ENCODE measurements at regions of chr19 and their contacts with region 1.

Region 1: GRCh38 chr19:17859533-17860330 is at the start of gene RPL18A:
- DNase-seq: peak; percentile 99
- ATAC-seq: peak; percentile 94
- H3K4me3 ChIP-seq: peak within 1 kb of the TSS; percentile 74 to 100 (median 96)
- H3K4me3 Mint-ChIP-seq: peak within 1 kb of the TSS; percentile 96
- H3K27ac ChIP-seq: peak within 1 kb of the TSS; percentile 69 to 76
- H3K27ac Mint-ChIP-seq: peak within 1 kb of the TSS; percentile 98
- H3K4me1 ChIP-seq: peaks cover 23 to 41% of the 10 kb centered on the region in 2 donors
- H3K4me1 Mint-ChIP-seq: peaks cover 45% of the 10 kb centered on the region
- H3K27me3 ChIP-seq: no peaks in the 10 kb centered on the region
- H3K27me3 Mint-ChIP-seq: no peaks in the 10 kb centered on the region
- CTCF ChIP-seq: peak; percentile 84
- total RNA-seq, gene RPL18A: 3,099 and 3,228 TPM in 2 replicates

Region 2: DNA sequence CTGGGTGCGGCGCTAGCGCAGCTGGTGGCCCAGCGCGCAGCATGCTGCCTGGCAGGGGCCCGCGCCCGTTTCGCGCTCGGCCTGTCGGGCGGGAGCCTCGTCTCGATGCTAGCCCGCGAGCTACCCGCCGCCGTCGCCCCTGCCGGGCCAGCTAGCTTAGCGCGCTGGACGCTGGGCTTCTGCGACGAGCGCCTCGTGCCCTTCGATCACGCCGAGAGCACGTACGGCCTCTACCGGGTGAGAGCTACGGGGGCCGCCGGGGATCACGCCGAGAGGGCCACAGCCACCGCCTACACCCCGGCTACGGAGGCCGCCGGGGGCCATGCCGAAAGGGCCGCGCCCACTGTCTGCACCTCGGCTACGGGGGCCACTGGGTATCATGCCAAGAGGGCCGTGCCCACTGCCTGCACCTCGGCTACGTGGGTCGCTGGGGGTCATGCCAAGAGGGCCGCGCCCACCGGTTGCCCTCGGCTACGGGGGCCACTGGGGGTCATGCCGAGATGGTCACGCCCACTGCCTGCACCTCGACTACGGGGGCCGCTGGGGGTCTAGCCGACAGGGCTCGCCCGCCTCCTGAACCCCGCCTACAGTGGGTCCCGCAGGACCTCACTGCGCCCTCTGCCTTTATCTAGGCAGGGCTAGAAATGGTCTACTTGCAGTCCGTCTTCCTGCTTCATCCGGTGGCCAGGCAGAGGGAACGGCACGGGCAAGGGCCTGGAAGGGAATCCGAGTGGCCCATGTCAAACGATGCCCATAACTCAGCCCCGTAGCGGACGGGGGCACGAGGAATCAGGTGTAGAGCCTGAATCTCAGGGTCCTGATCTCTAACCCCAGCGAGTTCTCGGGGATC is 347.8 kb before region 1 on chr19:
- CTCF ChIA-PET with region 1: interaction called, 3 read pairs
- POLR2A ChIA-PET with region 1: no interaction called
- intact Hi-C with region 1: loop called (anchors 5 kb)
- DNase-seq: peak; percentile 96
- ATAC-seq: peak; percentile 84
- H3K4me3 ChIP-seq: peak overlapping the region; percentile 68 to 98 (median 85)
- H3K4me3 Mint-ChIP-seq: peak overlapping the region; percentile 96
- H3K27ac ChIP-seq: peak overlapping the region; percentile 82 to 94
- H3K27ac Mint-ChIP-seq: peak overlapping the region; percentile 95
- H3K4me1 ChIP-seq: peaks cover 18 to 24% of the 10 kb centered on the region in 2 donors
- H3K4me1 Mint-ChIP-seq: peaks cover 40% of the 10 kb centered on the region
- H3K27me3 ChIP-seq: no peaks in the 10 kb centered on the region
- H3K27me3 Mint-ChIP-seq: no peaks in the 10 kb centered on the region
- CTCF ChIP-seq: peak; percentile 38

Region 3: DNA sequence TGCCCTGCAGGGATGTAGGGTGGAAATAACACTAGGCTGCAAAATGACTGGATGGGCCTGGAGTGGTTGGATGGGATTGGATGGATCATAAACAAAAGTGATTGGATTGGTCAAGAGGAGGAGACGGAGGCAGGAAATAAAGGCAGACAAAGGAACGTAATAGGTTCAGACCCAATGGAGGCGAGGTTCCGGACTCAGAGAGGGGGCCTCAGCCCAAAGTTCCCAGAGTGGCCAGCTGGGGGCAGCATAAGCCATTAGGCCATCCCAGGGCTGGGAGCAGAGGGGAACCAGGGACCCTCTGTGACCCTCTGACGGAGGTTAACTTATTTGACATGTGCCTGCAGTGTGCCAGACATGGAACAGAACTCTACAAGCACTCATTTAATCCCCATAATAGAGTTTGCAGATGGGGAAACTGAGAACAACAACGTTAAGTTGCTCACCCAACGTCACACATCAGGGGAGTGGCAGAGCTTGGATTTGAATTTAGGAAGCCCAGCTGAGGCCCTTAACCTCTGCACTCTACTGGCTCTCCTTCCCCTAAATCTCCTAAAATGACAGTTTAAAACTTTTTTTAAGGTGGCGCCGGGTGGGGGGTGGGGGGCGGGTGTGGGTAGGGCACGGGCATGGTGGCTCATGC is 155.8 kb before region 1 on chr19:
- CTCF ChIA-PET with region 1: interaction called, 89 read pairs
- POLR2A ChIA-PET with region 1: interaction called, 3 read pairs
- intact Hi-C with region 1: loop called (anchors 1 kb)
- DNase-seq: peak; percentile 80
- ATAC-seq: peak; percentile 93
- H3K4me3 ChIP-seq: no peak overlapping the region
- H3K4me3 Mint-ChIP-seq: no peak overlapping the region
- H3K27ac ChIP-seq: no peak overlapping the region
- H3K27ac Mint-ChIP-seq: peak overlapping the region; percentile 11
- H3K4me1 ChIP-seq: no peaks in the 10 kb centered on the region
- H3K4me1 Mint-ChIP-seq: peaks cover 5% of the 10 kb centered on the region
- H3K27me3 ChIP-seq: peaks cover 0 to 9% (median under 1%) of the 10 kb centered on the region in 4 experiments
- H3K27me3 Mint-ChIP-seq: peaks cover 11% of the 10 kb centered on the region
- CTCF ChIP-seq: peak; percentile 87

Region 4: DNA sequence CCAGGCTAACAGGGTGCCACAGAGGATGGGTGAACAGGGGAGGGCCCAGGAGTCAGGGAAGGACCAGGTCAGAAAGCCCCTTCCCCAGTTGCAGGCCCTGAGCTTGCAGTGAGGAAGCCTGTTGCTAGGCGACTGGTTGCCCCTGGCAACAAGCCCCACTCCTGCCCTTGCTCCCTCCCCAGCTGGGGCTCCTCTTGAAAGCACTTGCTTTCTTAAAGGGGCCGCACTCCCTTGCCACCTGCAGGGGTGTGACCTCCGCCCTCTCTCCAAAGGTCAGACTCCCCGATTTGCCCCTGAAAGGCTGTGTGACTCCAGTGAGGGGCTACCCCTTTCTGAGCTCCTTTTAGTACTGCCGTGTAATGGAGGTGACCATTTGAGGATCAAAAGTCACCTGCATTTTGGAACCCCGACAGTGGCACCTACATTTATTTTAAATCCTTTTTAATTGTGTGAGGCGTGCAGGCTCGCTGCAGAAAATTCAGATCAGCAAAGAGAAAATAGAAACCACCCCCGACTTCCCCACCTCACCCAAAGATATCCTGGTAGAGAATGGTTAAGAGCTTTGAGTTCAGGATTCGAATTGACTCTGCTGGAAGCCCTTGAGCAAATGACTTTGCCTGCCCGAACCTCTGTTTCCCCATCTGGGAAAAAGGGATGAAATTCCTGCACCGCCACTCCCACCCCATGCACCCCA is 103.6 kb before region 1 on chr19:
- CTCF ChIA-PET with region 1: interaction called, 15 read pairs
- POLR2A ChIA-PET with region 1: interaction called, 4 read pairs
- intact Hi-C with region 1: loop called (anchors 5 kb)
- DNase-seq: peak; percentile 82
- ATAC-seq: peak; percentile 4
- H3K4me3 ChIP-seq: peak overlapping the region in 1 of 5 experiments; percentile 34
- H3K4me3 Mint-ChIP-seq: peak overlapping the region; percentile 84
- H3K27ac ChIP-seq: peak overlapping the region; percentile 56 to 70
- H3K27ac Mint-ChIP-seq: peak overlapping the region; percentile 93
- H3K4me1 ChIP-seq: peaks cover 51 to 65% of the 10 kb centered on the region in 2 donors
- H3K4me1 Mint-ChIP-seq: peaks cover 79% of the 10 kb centered on the region
- H3K27me3 ChIP-seq: no peaks in the 10 kb centered on the region
- H3K27me3 Mint-ChIP-seq: no peaks in the 10 kb centered on the region
- CTCF ChIP-seq: no peak

Region 5: GRCh38 chr19:17784201-17785008 is 75.3 kb before region 1 on chr19:
- CTCF ChIA-PET with region 1: interaction called, 12 read pairs
- POLR2A ChIA-PET with region 1: interaction called, 4 read pairs
- intact Hi-C with region 1: loop called (anchors 1 kb)
- DNase-seq: peak; percentile 83
- ATAC-seq: peak; percentile 86
- H3K4me3 ChIP-seq: no peak overlapping the region
- H3K4me3 Mint-ChIP-seq: no peak overlapping the region
- H3K27ac ChIP-seq: no peak overlapping the region
- H3K27ac Mint-ChIP-seq: peak overlapping the region; percentile 51
- H3K4me1 ChIP-seq: peaks cover 0 to 6% of the 10 kb centered on the region in 2 donors
- H3K4me1 Mint-ChIP-seq: peaks cover 5% of the 10 kb centered on the region
- H3K27me3 ChIP-seq: no peaks in the 10 kb centered on the region
- H3K27me3 Mint-ChIP-seq: no peaks in the 10 kb centered on the region
- CTCF ChIP-seq: peak; percentile 85

Region 6: DNA sequence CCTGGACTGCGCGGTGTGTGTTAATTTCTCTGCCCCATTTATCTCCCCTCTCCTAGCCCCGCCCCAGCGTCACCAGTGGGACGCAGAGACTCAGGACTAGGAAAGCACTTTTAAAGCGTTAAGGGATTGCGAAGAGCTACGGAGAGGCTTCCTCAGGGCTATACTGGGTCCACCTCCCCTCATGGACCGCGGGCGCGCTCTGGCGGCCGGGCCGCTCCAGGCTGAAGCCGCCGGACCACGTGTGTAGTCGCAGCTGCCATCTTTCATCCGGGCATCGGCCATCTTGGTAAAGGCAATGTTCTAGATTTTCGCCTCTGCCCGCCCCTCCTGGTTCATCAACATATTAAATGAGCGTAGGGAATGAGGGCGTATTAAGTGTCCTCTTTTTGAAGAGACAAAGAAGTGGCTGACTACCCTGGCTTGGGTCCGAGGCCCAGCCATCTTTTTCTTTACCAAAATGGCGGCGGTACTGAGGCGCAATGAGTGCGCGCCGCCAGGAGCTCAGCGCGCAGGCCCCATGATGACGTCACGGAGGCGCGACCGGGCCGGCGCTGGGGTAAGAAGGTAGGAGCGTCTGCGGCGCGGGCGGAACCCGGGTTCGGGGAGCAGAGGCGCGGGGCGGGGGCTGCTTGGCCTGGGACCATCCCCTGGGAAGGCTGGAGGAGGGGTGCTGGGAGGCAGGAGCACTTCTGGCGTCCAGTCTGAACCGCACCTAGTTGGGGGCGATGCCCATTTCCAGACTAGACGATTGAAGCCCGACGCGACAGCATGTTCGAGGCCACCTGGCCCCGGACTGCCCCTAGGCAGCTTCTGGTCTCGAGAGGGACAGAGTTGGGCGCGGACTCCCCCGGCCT is 73.0 kb after region 1 on chr19 and contains the start of gene CCDC124:
- CTCF ChIA-PET with region 1: interaction called, 374 read pairs
- POLR2A ChIA-PET with region 1: interaction called, 65 read pairs
- intact Hi-C with region 1: loop called (anchors 1 kb)
- DNase-seq: peak; percentile 97
- ATAC-seq: peak; percentile 95
- H3K4me3 ChIP-seq: peak within 1 kb of the TSS; percentile 72 to 88 (median 79)
- H3K4me3 Mint-ChIP-seq: peak within 1 kb of the TSS; percentile 96
- H3K27ac ChIP-seq: peak within 1 kb of the TSS; percentile 93 to 96
- H3K27ac Mint-ChIP-seq: peak within 1 kb of the TSS; percentile 97
- H3K4me1 ChIP-seq: peaks cover 11 to 19% of the 10 kb centered on the region in 2 donors
- H3K4me1 Mint-ChIP-seq: peaks cover 22% of the 10 kb centered on the region
- H3K27me3 ChIP-seq: no peaks in the 10 kb centered on the region
- H3K27me3 Mint-ChIP-seq: no peaks in the 10 kb centered on the region
- CTCF ChIP-seq: peak; percentile 90
- total RNA-seq, gene CCDC124: 25.0 and 26.9 TPM in 2 replicates